MCF 10A (cell line): ENCODE measurements at regions of chr1 and their contacts with region 1.

Region 1: GRCh38 chr1:159790237-159790917 is 9.6 kb downstream of the DUSP23 start:
- DNase-seq: peak; percentile 66
- H3K4me3 Mint-ChIP-seq: no peak overlapping the region
- H3K27ac Mint-ChIP-seq: peak overlapping the region; percentile 29
- H3K4me1 Mint-ChIP-seq: peaks cover 32% of the 10 kb centered on the region
- H3K27me3 Mint-ChIP-seq: no peaks in the 10 kb centered on the region
- CTCF ChIP-seq: peak; percentile 85

Region 2: GRCh38 chr1:159804924-159805323 is 14.5 kb after region 1 on chr1:
- CTCF ChIA-PET with region 1: interaction called, 98 read pairs
- POLR2A ChIA-PET with region 1: interaction called, 4 read pairs
- intact Hi-C with region 1: no loop called
- DNase-seq: no peak
- H3K4me3 Mint-ChIP-seq: no peak overlapping the region
- H3K27ac Mint-ChIP-seq: no peak overlapping the region
- H3K4me1 Mint-ChIP-seq: peaks cover 6% of the 10 kb centered on the region
- H3K27me3 Mint-ChIP-seq: no peaks in the 10 kb centered on the region
- CTCF ChIP-seq: no peak